PC-3 (cell line): ENCODE measurements at regions of chr1 and their contacts with region 1.

Region 1: DNA sequence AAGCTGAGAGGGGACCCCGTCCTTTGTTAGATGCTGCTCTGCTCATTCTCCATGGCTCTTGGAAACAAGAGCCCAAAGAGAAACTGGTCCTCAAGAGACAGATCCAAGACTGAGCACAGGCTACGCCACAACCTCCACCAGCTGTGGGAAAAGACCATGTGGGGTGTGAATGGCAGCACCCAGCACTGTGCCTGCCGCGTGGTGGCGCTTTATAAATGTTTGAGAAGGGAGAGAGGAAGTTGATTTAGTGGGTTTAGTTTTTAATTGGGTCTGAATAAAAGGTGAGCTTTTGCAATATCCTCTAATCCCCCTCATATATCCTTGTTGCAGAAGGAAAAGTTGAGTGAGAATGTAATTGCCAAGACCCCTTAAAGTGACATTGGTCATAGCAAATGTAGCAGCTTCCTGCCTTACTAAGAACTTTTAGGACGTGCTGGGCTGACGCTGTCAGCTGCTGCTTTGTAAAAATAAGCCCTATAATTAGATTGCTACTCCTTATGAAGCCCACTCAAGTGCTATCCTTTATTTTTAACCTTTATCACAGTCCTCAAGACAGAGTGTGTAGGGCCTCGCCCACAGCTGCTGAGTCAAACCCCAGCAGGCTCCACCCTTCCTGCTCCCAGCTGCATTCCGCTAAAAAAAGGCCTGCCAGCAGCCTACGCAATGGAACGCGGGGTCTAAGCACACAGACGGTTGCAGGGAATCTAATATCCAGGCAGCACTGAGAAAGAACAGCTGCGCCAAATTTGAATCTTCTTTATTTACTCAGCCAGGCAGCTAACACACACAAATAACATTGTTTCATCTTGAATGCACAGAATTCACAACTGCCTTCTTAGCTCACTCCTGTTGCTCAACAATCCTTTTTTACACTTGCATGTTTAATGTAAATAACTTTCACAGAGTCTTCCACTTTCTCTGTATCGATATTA is 47.4 kb upstream of the PRDX6 start:
- DNase-seq: peak; percentile 100
- ATAC-seq: peak; percentile 83
- H3K4me3 ChIP-seq: peak overlapping the region; percentile 47
- H3K27ac ChIP-seq: peak overlapping the region; percentile 71
- H3K4me1 ChIP-seq: peaks cover 71% of the 10 kb centered on the region
- H3K27me3 ChIP-seq: no peaks in the 10 kb centered on the region
- CTCF ChIP-seq: peak; percentile 96

Region 2: DNA sequence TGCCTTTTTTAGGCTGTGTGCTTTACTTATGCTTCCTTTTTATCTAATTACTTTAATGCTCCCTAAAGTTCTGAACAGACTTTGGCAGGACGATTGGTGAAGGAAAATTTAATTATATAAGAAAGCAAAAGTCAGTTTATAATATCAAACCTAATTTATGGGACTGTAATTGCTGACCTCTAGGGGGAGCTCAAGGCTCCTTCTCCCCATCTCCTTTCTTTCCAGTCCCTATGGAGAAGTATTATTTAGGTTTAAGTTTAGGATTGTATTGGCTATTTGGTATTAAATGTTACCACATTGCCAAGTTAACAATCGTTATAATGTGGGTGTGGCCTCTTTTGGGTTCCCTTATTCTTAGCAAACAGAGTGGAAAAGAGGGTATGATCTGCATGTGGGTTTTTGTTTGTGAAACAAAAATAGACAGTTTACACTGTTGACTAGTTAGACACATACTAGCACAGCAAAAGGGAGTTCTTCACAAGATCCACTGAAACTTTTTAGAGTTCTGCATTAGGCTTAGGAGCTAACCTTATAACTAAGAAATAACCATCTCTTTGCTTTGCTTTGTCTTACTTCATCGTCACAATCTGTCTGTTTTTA is 174.4 kb before region 1 on chr1:
- CTCF ChIA-PET with region 1: no interaction called
- POLR2A ChIA-PET with region 1: no interaction called
- intact Hi-C with region 1: loop called (anchors 1 kb)
- DNase-seq: peak; percentile 90
- ATAC-seq: peak; percentile 90
- H3K4me3 ChIP-seq: no peak overlapping the region
- H3K27ac ChIP-seq: no peak overlapping the region
- H3K4me1 ChIP-seq: no peaks in the 10 kb centered on the region
- H3K27me3 ChIP-seq: no peaks in the 10 kb centered on the region
- CTCF ChIP-seq: peak; percentile 100

Region 3: GRCh38 chr1:173554541-173555250 is 125.0 kb after region 1 on chr1:
- CTCF ChIA-PET with region 1: no interaction called
- POLR2A ChIA-PET with region 1: no interaction called
- intact Hi-C with region 1: loop called (anchors 1 kb)
- DNase-seq: peak; percentile 98
- ATAC-seq: peak; percentile 98
- H3K4me3 ChIP-seq: 0 out of 2 replicates have a peak overlapping the region, but pooled peaks have one; percentile 1
- H3K27ac ChIP-seq: peak overlapping the region; percentile 69
- H3K4me1 ChIP-seq: peaks cover 26% of the 10 kb centered on the region
- H3K27me3 ChIP-seq: no peaks in the 10 kb centered on the region
- CTCF ChIP-seq: no peak

Region 4: GRCh38 chr1:173648880-173649605 is 219.3 kb after region 1 on chr1:
- CTCF ChIA-PET with region 1: no interaction called
- POLR2A ChIA-PET with region 1: no interaction called
- intact Hi-C with region 1: loop called (anchors 5 kb)
- DNase-seq: peak; percentile 97
- ATAC-seq: peak; percentile 97
- H3K4me3 ChIP-seq: no peak overlapping the region
- H3K27ac ChIP-seq: peak overlapping the region; percentile 3
- H3K4me1 ChIP-seq: peaks cover 24% of the 10 kb centered on the region
- H3K27me3 ChIP-seq: no peaks in the 10 kb centered on the region
- CTCF ChIP-seq: no peak

Region 5: DNA sequence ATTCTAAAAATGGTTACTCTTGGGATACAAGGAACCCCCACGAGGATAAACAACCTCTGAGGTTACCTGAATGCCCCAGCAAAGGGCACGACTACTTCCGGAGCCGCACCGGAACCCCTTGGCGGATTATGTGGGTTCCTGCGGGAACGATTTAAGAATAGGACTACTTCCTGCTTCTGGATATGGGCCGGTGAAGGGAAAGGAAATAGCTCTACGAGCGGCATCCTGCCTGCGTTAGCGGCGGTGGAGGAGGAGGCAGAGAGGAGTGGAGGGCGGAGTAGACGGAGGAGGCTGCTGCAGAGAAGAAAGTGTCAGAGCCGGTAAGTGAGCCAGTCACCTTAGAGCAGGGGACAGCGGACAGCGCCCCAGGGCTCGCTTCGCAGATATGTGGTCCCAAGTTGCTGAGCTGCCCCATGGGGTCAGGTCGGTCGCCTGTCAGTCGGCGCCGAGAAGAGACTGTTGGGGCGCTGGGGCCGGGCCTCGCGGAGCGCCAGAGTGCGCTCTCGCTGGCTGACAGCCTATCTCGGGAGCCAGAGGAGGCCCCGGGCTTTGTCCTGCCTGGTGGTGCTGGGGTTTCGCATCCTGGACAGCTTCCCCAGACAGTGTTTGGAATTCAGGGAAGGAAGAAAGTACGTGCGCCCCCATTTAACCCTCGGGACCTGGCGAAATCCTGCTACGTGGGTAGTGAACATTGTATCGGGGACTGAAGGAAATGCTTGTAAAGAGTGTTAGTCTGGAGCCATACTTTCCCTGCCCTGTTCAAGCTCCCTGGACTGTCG is 285.2 kb after region 1 on chr1 and contains the start of gene KLHL20:
- CTCF ChIA-PET with region 1: no interaction called
- POLR2A ChIA-PET with region 1: interaction called, 12 read pairs
- intact Hi-C with region 1: loop called (anchors 1 kb)
- DNase-seq: peak; percentile 100
- ATAC-seq: peak; percentile 97
- H3K4me3 ChIP-seq: peak within 1 kb of the TSS; percentile 72
- H3K27ac ChIP-seq: peak within 1 kb of the TSS; percentile 33
- H3K4me1 ChIP-seq: peaks cover 20% of the 10 kb centered on the region
- H3K27me3 ChIP-seq: no peaks in the 10 kb centered on the region
- CTCF ChIP-seq: peak; percentile 49
- total RNA-seq, gene KLHL20: 46.2 and 46.4 TPM in 2 replicates